Thyroid gland (tissue), 4 donors: ENCODE measurements at regions of chr22 and their contacts with region 1.

Region 1: DNA sequence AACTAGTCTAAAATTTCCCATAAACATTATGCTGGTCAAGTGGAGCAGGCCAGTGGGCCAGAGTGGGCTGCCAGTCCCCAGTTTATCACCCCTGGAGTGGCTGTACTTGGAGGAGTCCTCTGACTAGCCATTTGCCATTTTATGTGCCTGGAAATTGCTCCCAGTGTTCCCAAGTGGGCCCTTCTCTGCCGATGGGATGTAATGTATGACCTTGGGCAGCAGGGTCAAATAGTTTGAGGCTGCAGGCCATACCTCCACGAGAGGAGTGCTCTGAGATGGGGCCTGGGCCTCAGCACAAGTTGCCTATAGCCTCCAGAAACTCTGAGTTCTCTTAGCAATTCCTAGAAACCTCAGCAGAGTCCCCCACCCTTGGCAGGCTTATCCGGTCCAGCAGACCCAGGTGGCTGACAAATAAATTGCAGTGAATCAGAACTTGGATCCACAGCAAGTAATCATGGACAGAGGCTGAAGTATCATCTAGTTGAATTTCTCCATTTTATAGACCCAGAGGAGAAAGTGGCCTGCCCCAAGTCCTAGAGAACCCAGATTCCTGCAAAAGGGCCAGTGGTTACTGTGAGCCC is 17.8 kb upstream of the PATZ1 start:
- DNase-seq: no peak
- H3K4me3 ChIP-seq: no peak overlapping the region
- H3K27ac ChIP-seq: no peak overlapping the region
- H3K4me1 ChIP-seq: no peaks in the 10 kb centered on the region
- H3K27me3 ChIP-seq: no peaks in the 10 kb centered on the region
- CTCF ChIP-seq: no peak
- POLR2A ChIP-seq: no peak

Region 2: DNA sequence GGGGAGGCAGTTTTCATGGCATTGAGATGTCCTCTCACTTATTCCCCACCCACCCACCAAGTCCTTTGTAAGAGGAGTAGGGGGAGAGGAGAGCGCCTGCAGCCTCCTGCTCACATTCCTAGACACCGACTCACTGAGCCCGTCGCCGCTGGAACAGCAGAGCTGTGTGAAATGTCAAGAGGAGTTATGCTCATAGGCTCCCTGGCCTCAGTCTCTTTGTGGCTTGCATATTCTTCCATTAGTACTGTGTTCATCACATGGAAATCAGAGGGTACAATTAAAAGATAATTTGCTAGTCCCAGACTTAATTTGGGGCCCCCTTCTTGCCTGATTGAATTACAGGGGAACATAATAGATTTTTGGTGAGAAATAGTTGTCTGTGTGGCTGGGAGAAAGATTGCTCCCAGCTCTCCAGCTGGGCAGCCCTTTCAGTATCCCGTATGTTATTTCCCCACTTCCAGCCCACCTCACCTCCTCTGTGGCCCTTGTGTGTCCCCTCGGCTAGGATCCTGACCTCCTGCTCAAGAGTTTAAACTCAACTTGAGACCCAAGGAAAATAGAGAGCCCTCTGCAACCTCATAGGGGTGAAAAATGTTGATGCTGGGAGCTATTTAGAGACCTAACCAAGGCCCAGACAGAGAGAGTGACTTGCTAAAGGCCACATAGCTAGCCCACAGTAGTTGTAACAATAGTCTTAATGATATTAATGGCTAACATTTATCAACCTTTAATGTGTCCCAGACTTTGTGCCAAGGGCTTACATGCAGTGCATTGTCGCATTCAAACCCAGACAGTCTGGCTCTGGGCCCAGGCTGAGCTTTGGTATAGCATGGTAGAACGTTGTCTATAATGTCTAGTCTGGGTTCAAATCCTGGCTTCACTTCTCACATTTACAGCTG is 119.7 kb before region 1 on chr22:
- intact Hi-C with region 1: no loop called
- DNase-seq: peak; percentile 43 to 45
- H3K4me3 ChIP-seq: no peak overlapping the region
- H3K27ac ChIP-seq: peak overlapping the region in 2 of 3 donors; percentile 25 to 59
- H3K4me1 ChIP-seq: peaks cover 18 to 47% of the 10 kb centered on the region in 2 donors
- H3K27me3 ChIP-seq: no peaks in the 10 kb centered on the region
- CTCF ChIP-seq: no peak
- POLR2A ChIP-seq: no peak

Region 3: GRCh38 chr22:31425331-31426050 is 61.5 kb after region 1 on chr22:
- intact Hi-C with region 1: loop called (anchors 10 kb)
- DNase-seq: no peak
- H3K4me3 ChIP-seq: no peak overlapping the region
- H3K27ac ChIP-seq: no peak overlapping the region
- H3K4me1 ChIP-seq: no peaks in the 10 kb centered on the region
- H3K27me3 ChIP-seq: no peaks in the 10 kb centered on the region
- CTCF ChIP-seq: no peak
- POLR2A ChIP-seq: no peak